OCI-LY7 (cell line): ENCODE measurements at regions of chr20 and their contacts with region 1.

Region 1: GRCh38 chr20:45095753-45096371 is 5.1 kb downstream of the KCNS1 start:
- DNase-seq: peak; percentile 81
- H3K4me3 ChIP-seq: no peak overlapping the region
- H3K27ac ChIP-seq: no peak overlapping the region
- H3K4me1 ChIP-seq: no peaks in the 10 kb centered on the region
- CTCF ChIP-seq: peak; percentile 90

Region 2: GRCh38 chr20:45011108-45011526 is 84.7 kb before region 1 on chr20:
- CTCF ChIA-PET with region 1: no interaction called
- POLR2A ChIA-PET with region 1: no interaction called
- intact Hi-C with region 1: loop called (anchors 1 kb)
- DNase-seq: peak; percentile 65
- H3K4me3 ChIP-seq: no peak overlapping the region
- H3K27ac ChIP-seq: no peak overlapping the region
- H3K4me1 ChIP-seq: no peaks in the 10 kb centered on the region
- CTCF ChIP-seq: peak; percentile 97

Region 3: GRCh38 chr20:45044084-45044573 is 51.7 kb before region 1 on chr20:
- CTCF ChIA-PET with region 1: no interaction called
- POLR2A ChIA-PET with region 1: no interaction called
- intact Hi-C with region 1: loop called (anchors 1 kb)
- DNase-seq: peak; percentile 83
- H3K4me3 ChIP-seq: no peak overlapping the region
- H3K27ac ChIP-seq: peak overlapping the region; percentile 56
- H3K4me1 ChIP-seq: peaks cover 26% of the 10 kb centered on the region
- CTCF ChIP-seq: peak; percentile 97